Dorsolateral prefrontal cortex (tissue), 120 donors: ENCODE measurements at regions of chr9 and their contacts with region 1.

Region 1: DNA sequence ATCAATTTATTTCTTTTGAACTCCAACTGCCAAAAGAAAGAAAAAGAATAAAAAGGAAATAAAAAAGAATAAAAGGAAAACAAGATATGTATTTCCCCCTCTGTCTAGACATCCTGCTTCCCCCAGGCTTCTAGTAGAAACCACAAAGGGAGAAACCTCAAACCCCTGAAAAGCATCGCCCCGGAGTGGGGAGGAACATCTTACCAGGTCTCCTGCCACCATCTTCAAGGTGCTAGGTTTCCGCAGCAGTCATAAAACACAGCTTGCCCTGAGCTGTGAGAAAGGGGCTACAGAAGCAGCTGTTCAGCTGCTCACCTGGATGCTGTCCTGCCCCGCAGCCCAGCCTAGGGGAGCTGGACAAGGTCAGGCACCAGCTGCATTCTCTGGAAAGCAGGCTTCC is 487.7 kb downstream of the GADD45G start:
- DNase-seq: no peak
- H3K4me3 ChIP-seq: no peak overlapping the region
- H3K27ac ChIP-seq: no peak overlapping the region
- H3K27me3 ChIP-seq: peaks cover 0 to 3% (median 0%) of the 10 kb centered on the region in 45 donors
- CTCF ChIP-seq: no peak

Region 2: DNA sequence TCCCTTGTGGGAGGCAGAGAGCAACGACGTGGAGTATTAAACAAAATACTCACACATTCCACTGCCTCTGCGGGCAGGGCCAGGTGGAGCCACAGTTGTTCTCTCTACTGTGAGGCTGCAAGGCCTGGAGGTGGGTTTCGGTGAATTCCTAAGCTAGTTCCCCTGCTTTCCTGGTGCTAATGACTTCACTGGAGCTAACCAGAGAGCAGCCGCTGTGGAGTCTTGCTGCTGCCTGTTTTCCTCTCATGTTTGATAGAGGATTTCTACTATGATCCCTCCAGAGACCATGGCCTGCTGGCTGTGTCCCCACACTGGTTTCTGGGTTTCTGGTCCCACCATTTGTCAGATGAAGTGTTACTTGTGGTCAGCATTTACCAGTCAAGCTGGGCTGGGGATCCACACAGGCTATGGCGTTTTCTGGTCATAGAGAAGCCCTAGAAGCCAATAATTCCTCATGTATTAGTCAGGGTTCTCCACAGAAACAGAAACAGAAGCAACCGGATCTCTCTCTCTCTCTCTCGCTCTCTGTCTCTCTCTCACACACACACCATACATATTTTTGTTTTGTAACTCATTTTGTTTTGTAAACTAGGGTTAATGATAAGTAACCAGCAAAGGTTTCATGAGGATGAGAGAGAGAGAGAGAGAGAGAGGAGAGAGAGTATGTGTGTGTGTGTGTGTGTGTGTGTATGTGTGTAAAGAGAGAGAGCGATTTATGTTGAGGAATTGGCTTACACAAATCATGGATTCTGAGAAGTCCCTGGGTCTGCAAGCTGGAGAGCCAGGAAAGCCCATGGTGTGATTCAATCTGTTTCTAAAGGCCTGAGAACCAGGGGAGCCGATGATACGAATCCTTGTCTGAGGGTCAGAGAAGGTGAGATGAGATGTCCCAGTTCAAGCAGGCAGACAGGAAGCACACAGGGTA is 84.7 kb before region 1 on chr9:
- intact Hi-C with region 1: loop called in 1 of 2 experiments (anchors 5 kb)
- DNase-seq: no peak
- H3K4me3 ChIP-seq: no peak overlapping the region
- H3K27ac ChIP-seq: no peak overlapping the region
- H3K27me3 ChIP-seq: no peaks in the 10 kb centered on the region
- CTCF ChIP-seq: no peak